T-cell (primary cell): ENCODE measurements at regions of chr22 and their contacts with region 1.

Region 1: GRCh38 chr22:30413745-30414524 is 11.6 kb upstream of the MTFP1 start:
- DNase-seq: peak in 1 of 35 experiments; percentile 21
- ATAC-seq: peak; percentile 76 to 79 (median 78)
- H3K4me3 ChIP-seq: peak overlapping the region in 1 of 2 donors; percentile 49
- H3K4me3 Mint-ChIP-seq: peak overlapping the region; percentile 2 to 29 (median 11)
- H3K27ac ChIP-seq: peak overlapping the region; percentile 62
- H3K27ac Mint-ChIP-seq: peak overlapping the region; percentile 87 to 94
- H3K4me1 ChIP-seq: peaks cover 16 to 31% of the 10 kb centered on the region in 2 experiments
- H3K4me1 Mint-ChIP-seq: peaks cover 35 to 51% (median 37%) of the 10 kb centered on the region in 3 donors
- H3K27me3 ChIP-seq: no peaks in the 10 kb centered on the region
- H3K27me3 Mint-ChIP-seq: no peaks in the 10 kb centered on the region

Region 2: DNA sequence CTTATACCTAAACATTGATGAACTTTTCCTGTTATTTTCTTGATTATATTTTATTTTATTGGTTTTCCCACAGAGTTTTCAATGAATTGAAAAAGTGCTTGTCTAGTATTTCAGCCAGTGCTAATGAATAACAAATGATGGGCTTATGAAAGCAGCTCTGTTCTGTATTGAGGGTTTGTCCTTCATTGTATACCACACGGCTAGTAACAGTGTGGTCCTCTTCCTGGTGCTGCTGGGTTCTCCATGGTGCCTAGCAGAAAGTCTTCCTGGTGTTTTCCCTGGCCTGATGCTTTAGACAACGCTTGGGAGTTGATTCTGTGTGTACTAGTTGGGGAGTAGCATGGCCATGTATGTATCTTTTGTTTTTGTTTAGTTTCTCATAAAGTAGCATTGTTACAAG is 441.8 kb before region 1 on chr22:
- CTCF ChIA-PET with region 1: no interaction called
- POLR2A ChIA-PET with region 1: no interaction called
- DNase-seq: no peak
- ATAC-seq: no peak
- H3K4me3 ChIP-seq: no peak overlapping the region
- H3K4me3 Mint-ChIP-seq: no peak overlapping the region
- H3K27ac ChIP-seq: no peak overlapping the region
- H3K27ac Mint-ChIP-seq: no peak overlapping the region
- H3K4me1 ChIP-seq: no peaks in the 10 kb centered on the region
- H3K4me1 Mint-ChIP-seq: peaks cover 7 to 10% (median 8%) of the 10 kb centered on the region in 3 donors
- H3K27me3 ChIP-seq: no peaks in the 10 kb centered on the region
- H3K27me3 Mint-ChIP-seq: no peaks in the 10 kb centered on the region

Region 3: GRCh38 chr22:30396871-30397655 is 16.9 kb before region 1 on chr22 and contains the start of gene SEC14L2:
- CTCF ChIA-PET with region 1: interaction called in 1 of 2 experiments, 3 read pairs
- POLR2A ChIA-PET with region 1: interaction called, 3 to 10 read pairs
- DNase-seq: peak; percentile 22 to 72 (median 49)
- ATAC-seq: peak; percentile 65 to 82 (median 78)
- H3K4me3 ChIP-seq: peak within 1 kb of the TSS; percentile 67 to 70
- H3K4me3 Mint-ChIP-seq: peak within 1 kb of the TSS; percentile 83 to 87 (median 86)
- H3K27ac ChIP-seq: peak within 1 kb of the TSS; percentile 34
- H3K27ac Mint-ChIP-seq: peak within 1 kb of the TSS; percentile 84 to 87
- H3K4me1 ChIP-seq: peaks cover 23 to 50% of the 10 kb centered on the region in 2 experiments
- H3K4me1 Mint-ChIP-seq: peaks cover 43 to 48% (median 44%) of the 10 kb centered on the region in 3 donors
- H3K27me3 ChIP-seq: peaks cover 0 to 48% of the 10 kb centered on the region in 2 experiments
- H3K27me3 Mint-ChIP-seq: peaks cover 0 to 7% of the 10 kb centered on the region in 2 donors
- total RNA-seq, gene SEC14L2: 10.9 to 87.9 (median 15.8) TPM

Region 4: DNA sequence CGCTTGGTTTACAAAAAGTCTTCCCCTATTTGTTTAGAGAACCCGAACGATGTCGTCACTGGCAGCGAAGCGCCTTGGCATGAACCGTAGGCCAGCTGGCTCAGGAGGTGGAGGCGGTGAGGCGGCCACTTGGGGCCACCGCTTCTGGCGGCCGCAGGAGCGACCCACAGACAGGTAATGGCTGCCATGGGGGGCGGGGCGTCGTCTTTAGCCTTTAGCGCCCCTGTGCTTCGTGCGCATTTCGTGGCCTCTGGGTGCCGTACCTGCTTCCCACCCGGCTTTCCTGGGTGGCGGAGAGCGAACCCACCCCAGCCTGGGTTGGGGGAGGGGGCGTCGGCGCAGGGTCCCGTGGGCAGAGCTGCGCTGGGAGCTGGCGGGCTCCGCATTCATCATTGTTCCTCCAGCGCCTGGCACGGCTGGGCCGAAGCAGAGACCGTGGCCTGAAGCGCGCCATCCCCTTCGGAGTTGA is 280.3 kb after region 1 on chr22:
- CTCF ChIA-PET with region 1: no interaction called
- POLR2A ChIA-PET with region 1: interaction called in 1 of 2 experiments, 10 read pairs
- DNase-seq: peak in 34 of 35 experiments; percentile 1 to 64 (median 36)
- ATAC-seq: peak; percentile 71 to 85 (median 80)
- H3K4me3 ChIP-seq: peak overlapping the region; percentile 60 to 75
- H3K4me3 Mint-ChIP-seq: peak overlapping the region; percentile 78 to 92 (median 88)
- H3K27ac ChIP-seq: peak overlapping the region; percentile 34
- H3K27ac Mint-ChIP-seq: peak overlapping the region; percentile 85 to 90
- H3K4me1 ChIP-seq: peaks cover 0 to 16% of the 10 kb centered on the region in 2 experiments
- H3K4me1 Mint-ChIP-seq: peaks cover 13 to 19% (median 17%) of the 10 kb centered on the region in 3 donors
- H3K27me3 ChIP-seq: peaks cover 6 to 24% of the 10 kb centered on the region in 2 experiments
- H3K27me3 Mint-ChIP-seq: peaks cover 0 to 15% of the 10 kb centered on the region in 2 donors